Aorta (tissue), 5 donors: ENCODE measurements at regions of chr17 and their contacts with region 1.

Region 1: GRCh38 chr17:79019632-79020584 is 4.1 kb upstream of the C1QTNF1 start:
- DNase-seq: peak; percentile 86 to 94
- ATAC-seq: peak; percentile 86
- H3K4me3 ChIP-seq: no peak overlapping the region
- H3K27ac ChIP-seq: peak overlapping the region; percentile 53 to 92
- H3K4me1 ChIP-seq: peaks cover 0 to 7% of the 10 kb centered on the region in 2 donors
- H3K27me3 ChIP-seq: no peaks in the 10 kb centered on the region

Region 2: DNA sequence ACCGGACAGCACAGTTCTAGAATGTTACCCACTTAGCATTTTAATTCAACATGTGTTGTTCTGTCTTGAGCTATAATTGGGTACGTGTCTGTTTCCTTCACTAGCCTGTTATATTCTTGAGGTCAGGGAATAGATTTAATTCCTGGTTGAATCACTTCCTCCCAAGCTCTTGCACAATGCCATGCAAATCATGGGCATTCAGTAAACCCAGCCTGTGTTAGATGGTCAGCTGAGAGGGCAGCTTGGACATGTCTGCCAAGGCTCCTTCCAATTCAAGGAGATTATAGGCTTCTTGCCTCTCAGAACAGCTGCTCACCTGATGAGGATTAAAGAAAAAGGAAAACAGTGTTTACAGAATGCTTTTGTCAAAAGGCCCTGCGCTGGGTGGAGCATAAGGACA is 16.7 kb after region 1 on chr17:
- intact Hi-C with region 1: loop called in 1 of 2 experiments (anchors 2 kb)
- DNase-seq: peak; percentile 41 to 68
- ATAC-seq: no peak
- H3K4me3 ChIP-seq: no peak overlapping the region
- H3K27ac ChIP-seq: peak overlapping the region in 1 of 2 donors; percentile 21
- H3K4me1 ChIP-seq: peaks cover 1 to 2% of the 10 kb centered on the region in 2 donors
- H3K27me3 ChIP-seq: no peaks in the 10 kb centered on the region

Region 3: DNA sequence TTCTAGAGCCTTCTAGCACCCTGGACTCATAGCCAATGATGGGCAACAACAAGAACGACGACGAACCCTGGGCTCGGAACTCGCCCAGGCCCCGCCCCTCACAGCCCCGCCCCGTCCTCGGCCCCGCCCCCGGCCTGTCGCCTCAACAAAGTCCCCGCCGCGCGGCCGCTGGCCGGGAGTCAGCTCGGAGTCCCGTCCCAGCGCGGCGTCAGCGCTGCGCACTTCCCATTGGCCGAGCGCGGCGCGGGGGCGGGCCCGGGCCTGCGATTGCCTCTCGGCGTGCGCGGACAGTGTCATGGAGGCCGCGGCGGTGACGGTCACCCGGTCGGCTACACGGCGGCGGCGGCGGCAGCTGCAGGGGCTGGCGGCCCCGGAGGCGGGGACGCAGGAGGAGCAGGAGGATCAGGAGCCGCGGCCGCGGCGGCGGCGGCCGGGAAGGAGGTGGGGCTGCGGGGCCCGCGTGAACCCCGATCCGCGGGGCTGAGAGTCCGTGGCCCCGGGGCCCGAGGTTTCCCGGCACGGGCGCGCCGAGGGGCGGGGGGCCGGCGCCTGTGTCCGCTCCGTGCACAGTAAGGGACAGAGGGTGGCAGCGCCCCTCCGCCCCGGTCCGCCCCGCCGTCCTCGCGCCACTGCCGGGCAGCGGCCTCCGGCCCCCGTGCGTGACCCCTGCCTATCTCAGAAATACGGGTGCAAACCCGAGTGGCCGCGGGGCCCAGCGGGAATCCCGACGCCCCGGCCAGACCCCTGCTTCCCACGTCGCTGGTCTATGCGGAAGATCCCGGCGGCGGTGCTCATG is 54.9 kb after region 1 on chr17 and contains the start of gene ENGASE:
- intact Hi-C with region 1: loop called (anchors 10 kb)
- DNase-seq: peak; percentile 97 to 98
- ATAC-seq: peak; percentile 97
- H3K4me3 ChIP-seq: peak within 1 kb of the TSS; percentile 61 to 62
- H3K27ac ChIP-seq: peak within 1 kb of the TSS in 1 of 2 donors; percentile 23
- H3K4me1 ChIP-seq: no peaks in the 10 kb centered on the region
- H3K27me3 ChIP-seq: no peaks in the 10 kb centered on the region
- total RNA-seq, gene ENGASE: 42.9 to 60.3 TPM